ENCODE measurements at regions of chr10 and their contacts with region 1.

Region 1: DNA sequence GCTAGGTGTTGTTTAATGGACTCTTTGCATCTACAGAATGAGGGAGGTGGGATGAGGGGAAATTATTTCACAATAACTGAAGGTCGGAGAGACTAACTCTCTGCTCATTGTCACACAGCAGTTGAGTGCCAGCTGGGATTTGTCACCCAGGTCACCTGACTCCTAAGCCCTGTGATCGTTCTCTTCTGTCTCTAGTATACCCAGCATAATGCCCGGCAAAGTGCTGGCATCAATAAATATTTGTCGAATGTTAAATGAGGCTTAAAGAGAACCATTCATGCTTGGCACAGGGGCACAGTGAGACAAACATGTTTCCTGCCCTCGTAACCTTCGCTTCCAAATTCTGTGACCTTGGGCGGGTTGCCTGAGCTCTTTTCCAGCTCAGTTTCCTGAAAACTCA is 70.8 kb downstream of the TCF7L2 start:
- DNase-seq: no peak
- H3K4me3 ChIP-seq: no peak overlapping the region
- H3K27ac ChIP-seq: peak overlapping the region; percentile 64 to 72
- H3K4me1 ChIP-seq: peaks cover 13 to 50% of the 10 kb centered on the region in 2 donors
- H3K27me3 ChIP-seq: no peaks in the 10 kb centered on the region
- CTCF ChIP-seq: no peak

Region 2: DNA sequence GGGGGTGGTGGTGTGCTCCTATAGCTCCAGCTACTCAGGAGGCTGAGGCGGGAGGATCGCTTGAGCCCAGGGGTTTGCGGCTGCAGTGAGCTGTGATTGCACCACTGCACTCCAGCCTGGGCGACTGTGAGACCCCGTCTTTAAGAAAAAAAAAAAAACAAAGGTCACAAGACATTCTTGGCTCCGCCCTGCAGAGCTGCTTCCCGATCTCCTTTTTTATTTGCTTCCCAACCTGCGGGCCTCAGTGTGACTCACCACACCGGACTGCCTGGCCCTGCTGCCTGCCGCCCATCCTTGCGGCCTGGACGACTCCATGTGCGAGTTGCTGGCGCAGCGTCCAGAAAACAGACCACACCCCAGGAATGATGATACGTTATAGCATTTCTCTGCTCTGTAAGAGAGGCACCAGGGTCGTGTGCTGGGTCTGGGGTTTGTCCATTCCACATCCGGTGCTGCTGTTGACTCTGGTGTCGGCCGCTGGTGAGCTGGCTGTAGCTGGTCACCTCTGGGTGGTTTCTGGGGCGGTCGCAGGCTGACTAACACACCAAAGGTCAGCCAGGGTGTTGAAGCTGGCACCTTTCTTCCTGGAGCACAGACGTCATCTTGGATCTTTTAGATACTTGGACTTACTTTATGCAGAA is 52.8 kb after region 1 on chr10:
- intact Hi-C with region 1: loop called (anchors 2 kb)
- DNase-seq: peak; percentile 69 to 96
- H3K4me3 ChIP-seq: peak overlapping the region in 1 of 2 donors; percentile 19
- H3K27ac ChIP-seq: peak overlapping the region; percentile 83 to 87
- H3K4me1 ChIP-seq: peaks cover 11 to 36% of the 10 kb centered on the region in 2 donors
- H3K27me3 ChIP-seq: no peaks in the 10 kb centered on the region
- CTCF ChIP-seq: no peak